ENCODE measurements at regions of chr1 and their contacts with region 1.

Region 1: GRCh38 chr1:81800695-81801650 is at the start of gene ADGRL2:
- DNase-seq: peak; percentile 88
- ATAC-seq: peak; percentile 73
- H3K4me3 ChIP-seq: peak within 1 kb of the TSS; percentile 55
- H3K27ac ChIP-seq: peak within 1 kb of the TSS; percentile 74
- H3K4me1 ChIP-seq: no peaks in the 10 kb centered on the region
- H3K27me3 ChIP-seq: peaks cover 8% of the 10 kb centered on the region
- CTCF ChIP-seq: no peak
- POLR2A ChIP-seq: no peak
- RAD21 ChIP-seq: 0 out of 2 replicates have a peak, but pooled peaks have one; percentile 13
- total RNA-seq, gene ADGRL2: 36.9 and 42.7 TPM in 2 replicates

Region 2: GRCh38 chr1:80218112-80218511 is 1582.9 kb before region 1 on chr1:
- CTCF ChIA-PET with region 1: no interaction called
- POLR2A ChIA-PET with region 1: no interaction called
- dilution Hi-C with region 1: no loop called
- in situ Hi-C with region 1: no loop called
- intact Hi-C with region 1: loop called (anchors 2 kb)
- DNase-seq: peak; percentile 59
- ATAC-seq: peak; percentile 85
- H3K4me3 ChIP-seq: no peak overlapping the region
- H3K27ac ChIP-seq: no peak overlapping the region
- H3K4me1 ChIP-seq: no peaks in the 10 kb centered on the region
- H3K27me3 ChIP-seq: no peaks in the 10 kb centered on the region
- CTCF ChIP-seq: peak; percentile 58
- POLR2A ChIP-seq: no peak
- RAD21 ChIP-seq: peak; percentile 57

Region 3: GRCh38 chr1:81305997-81306452 is 494.9 kb before region 1 on chr1:
- CTCF ChIA-PET with region 1: no interaction called
- POLR2A ChIA-PET with region 1: no interaction called
- dilution Hi-C with region 1: no loop called
- in situ Hi-C with region 1: no loop called
- intact Hi-C with region 1: loop called (anchors 1 kb)
- DNase-seq: peak; percentile 54
- ATAC-seq: peak; percentile 95
- H3K4me3 ChIP-seq: peak overlapping the region; percentile 80
- H3K27ac ChIP-seq: no peak overlapping the region
- H3K4me1 ChIP-seq: no peaks in the 10 kb centered on the region
- H3K27me3 ChIP-seq: no peaks in the 10 kb centered on the region
- CTCF ChIP-seq: peak; percentile 34
- POLR2A ChIP-seq: no peak
- RAD21 ChIP-seq: peak; percentile 43

Region 4: GRCh38 chr1:81525085-81525484 is 275.9 kb before region 1 on chr1:
- CTCF ChIA-PET with region 1: no interaction called
- POLR2A ChIA-PET with region 1: no interaction called
- dilution Hi-C with region 1: no loop called
- in situ Hi-C with region 1: no loop called
- intact Hi-C with region 1: no loop called
- DNase-seq: no peak
- ATAC-seq: no peak
- H3K4me3 ChIP-seq: no peak overlapping the region
- H3K27ac ChIP-seq: no peak overlapping the region
- H3K4me1 ChIP-seq: no peaks in the 10 kb centered on the region
- H3K27me3 ChIP-seq: no peaks in the 10 kb centered on the region
- CTCF ChIP-seq: no peak
- POLR2A ChIP-seq: no peak
- RAD21 ChIP-seq: no peak

Region 5: DNA sequence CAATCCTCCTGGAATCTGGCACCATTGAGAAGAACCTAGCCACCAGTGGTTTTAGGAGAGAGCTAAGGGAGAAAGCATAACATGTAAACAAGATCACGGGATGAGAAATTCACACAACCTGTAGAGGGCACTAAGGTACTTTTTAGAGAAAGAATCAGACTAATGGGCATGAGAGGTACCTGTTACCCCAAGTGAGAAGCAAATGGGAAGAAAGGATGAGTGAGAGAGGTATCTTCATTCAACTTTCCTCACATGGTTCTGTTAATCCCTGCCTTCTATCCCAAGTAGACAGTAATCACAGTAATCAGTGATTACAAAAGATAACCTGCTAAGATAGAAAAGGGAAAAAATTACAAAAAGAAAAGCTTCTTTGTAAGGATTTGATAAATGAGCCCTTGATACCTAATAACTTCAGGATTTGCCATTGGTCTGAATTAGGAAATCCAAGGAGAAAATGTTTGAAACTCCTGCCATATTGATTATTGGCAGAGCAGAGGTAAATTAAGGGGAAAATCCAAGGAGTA is 251.3 kb before region 1 on chr1:
- CTCF ChIA-PET with region 1: interaction called, 3 read pairs
- POLR2A ChIA-PET with region 1: no interaction called
- dilution Hi-C with region 1: no loop called
- in situ Hi-C with region 1: no loop called
- intact Hi-C with region 1: loop called (anchors 2 kb)
- DNase-seq: peak; percentile 52
- ATAC-seq: peak; percentile 82
- H3K4me3 ChIP-seq: no peak overlapping the region
- H3K27ac ChIP-seq: no peak overlapping the region
- H3K4me1 ChIP-seq: no peaks in the 10 kb centered on the region
- H3K27me3 ChIP-seq: no peaks in the 10 kb centered on the region
- CTCF ChIP-seq: peak; percentile 65
- POLR2A ChIP-seq: no peak
- RAD21 ChIP-seq: peak; percentile 77

Region 6: GRCh38 chr1:81912383-81912782 is 111.4 kb after region 1 on chr1:
- CTCF ChIA-PET with region 1: no interaction called
- POLR2A ChIA-PET with region 1: no interaction called
- dilution Hi-C with region 1: no loop called
- in situ Hi-C with region 1: no loop called
- intact Hi-C with region 1: no loop called
- DNase-seq: no peak
- ATAC-seq: no peak
- H3K4me3 ChIP-seq: no peak overlapping the region
- H3K27ac ChIP-seq: no peak overlapping the region
- H3K4me1 ChIP-seq: no peaks in the 10 kb centered on the region
- H3K27me3 ChIP-seq: no peaks in the 10 kb centered on the region
- CTCF ChIP-seq: no peak
- POLR2A ChIP-seq: no peak
- RAD21 ChIP-seq: no peak

Region 7: DNA sequence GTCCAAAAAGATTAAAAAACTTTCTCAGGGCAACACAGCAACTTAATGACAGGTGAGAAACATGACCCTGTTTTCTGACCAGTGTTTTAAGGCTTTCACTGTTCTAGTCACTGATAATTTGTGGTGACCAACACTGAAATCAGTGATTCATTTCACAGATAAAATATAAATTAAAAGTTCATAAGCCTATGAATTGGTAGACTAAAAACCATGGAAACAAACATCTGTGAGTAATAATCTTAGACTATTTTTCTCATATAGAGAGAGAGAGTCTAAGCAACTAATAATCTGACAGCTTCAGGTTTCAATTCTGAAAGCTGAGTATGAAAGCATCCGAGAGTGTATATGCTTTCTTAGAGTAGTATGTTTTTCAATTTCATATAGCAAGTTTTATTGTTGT is 536.7 kb after region 1 on chr1:
- CTCF ChIA-PET with region 1: no interaction called
- POLR2A ChIA-PET with region 1: no interaction called
- dilution Hi-C with region 1: no loop called
- in situ Hi-C with region 1: no loop called
- intact Hi-C with region 1: loop called (anchors 5 kb)
- DNase-seq: no peak
- ATAC-seq: no peak
- H3K4me3 ChIP-seq: no peak overlapping the region
- H3K27ac ChIP-seq: no peak overlapping the region
- H3K4me1 ChIP-seq: no peaks in the 10 kb centered on the region
- H3K27me3 ChIP-seq: no peaks in the 10 kb centered on the region
- CTCF ChIP-seq: no peak
- POLR2A ChIP-seq: no peak
- RAD21 ChIP-seq: no peak

Measured in IMR-90 (cell line).